ENCODE measurements at regions of chr6 and their contacts with region 1.

Region 1: GRCh38 chr6:30326526-30327260 is at the start of gene TRIM39:
- DNase-seq: peak; percentile 83

Region 2: GRCh38 chr6:28634761-28635546 is 1691.7 kb before region 1 on chr6:
- CTCF ChIA-PET with region 1: no interaction called
- POLR2A ChIA-PET with region 1: no interaction called
- DNase-seq: peak; percentile 61

Region 3: GRCh38 chr6:30212865-30213666 is 113.6 kb before region 1 on chr6 and contains the start of gene TRIM26:
- CTCF ChIA-PET with region 1: no interaction called
- POLR2A ChIA-PET with region 1: interaction called, 17 read pairs
- DNase-seq: peak; percentile 96

Region 4: DNA sequence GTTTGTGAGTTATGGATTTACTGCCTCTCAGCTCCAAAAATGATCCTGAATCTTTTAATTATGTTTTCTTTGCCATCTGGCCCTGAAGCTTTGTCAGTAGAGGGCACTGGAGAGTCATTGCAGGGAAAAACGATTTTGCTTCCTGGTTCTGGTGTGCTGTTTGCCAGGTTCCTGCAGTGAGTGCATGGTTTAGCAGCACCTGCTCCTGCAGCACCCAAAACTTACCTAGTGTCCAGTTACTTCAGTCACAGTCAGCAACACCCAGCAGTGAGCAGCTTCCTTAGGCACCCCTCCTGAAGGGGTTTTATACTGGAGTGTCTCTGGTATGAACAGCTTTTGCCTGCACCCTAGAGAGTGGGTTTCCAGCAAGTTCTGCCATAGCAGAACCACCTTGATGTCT is 107.4 kb before region 1 on chr6:
- CTCF ChIA-PET with region 1: interaction called, 7 read pairs
- POLR2A ChIA-PET with region 1: interaction called, 17 read pairs
- DNase-seq: peak; percentile 58

Region 5: DNA sequence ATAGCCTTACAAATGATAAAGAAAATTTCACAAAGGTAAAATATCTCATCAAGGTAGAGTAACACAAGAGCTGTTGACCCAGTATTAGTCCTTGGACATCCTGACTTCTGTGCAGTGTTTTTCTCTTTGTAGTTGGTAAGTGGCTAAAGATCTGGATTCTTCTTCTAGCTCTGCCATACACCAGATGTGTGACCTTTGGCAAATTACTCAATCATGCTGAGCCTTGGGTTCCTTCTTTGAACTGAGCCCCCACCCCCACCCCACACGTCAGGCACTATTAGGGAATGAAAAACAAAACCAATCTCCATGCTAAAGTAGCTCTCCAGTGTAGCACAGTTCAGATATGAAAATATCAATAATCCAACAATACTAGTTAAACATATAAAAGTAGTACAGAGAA is 15.0 kb before region 1 on chr6:
- CTCF ChIA-PET with region 1: interaction called, 6 read pairs
- POLR2A ChIA-PET with region 1: interaction called, 20 read pairs
- DNase-seq: no peak

Region 6: GRCh38 chr6:30344868-30345671 is 18.4 kb after region 1 on chr6 and contains the start of gene RPP21:
- CTCF ChIA-PET with region 1: no interaction called
- POLR2A ChIA-PET with region 1: interaction called, 10 read pairs
- DNase-seq: peak; percentile 95

Measured in HEK293T (cell line).